IMR-90 (cell line): ENCODE measurements at regions of chr4 and their contacts with region 1.

Region 1: DNA sequence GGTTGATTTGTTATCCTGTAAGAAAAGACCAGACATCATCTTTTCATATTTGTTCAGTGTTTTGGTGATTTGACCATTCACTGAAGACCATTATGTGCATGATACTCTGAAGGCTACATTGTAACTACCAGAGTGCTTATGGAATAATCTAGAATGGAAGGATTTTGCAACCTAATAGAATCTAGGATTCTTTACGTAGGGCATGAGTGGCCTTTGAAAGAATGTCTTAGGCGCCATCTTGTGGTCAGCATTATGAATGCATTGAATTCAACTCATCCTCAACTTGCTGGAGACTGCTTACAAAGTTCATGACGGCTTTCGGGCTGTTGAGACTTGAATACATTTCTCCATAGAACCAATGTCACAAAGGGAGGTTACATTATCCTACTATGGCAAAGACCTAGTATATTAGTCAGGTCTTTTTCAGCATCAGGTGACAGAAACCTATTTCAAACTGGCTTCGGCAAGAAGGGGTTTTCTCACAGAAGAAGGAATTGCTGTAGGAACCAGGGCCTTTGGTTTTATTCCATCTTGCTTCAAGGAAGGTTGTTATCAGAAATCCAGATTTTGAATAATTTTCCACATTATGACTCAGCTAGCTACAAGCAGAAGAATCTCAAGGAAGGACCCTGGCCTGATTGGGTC is 104.1 kb downstream of the GPAT3 start:
- DNase-seq: peak; percentile 80
- ATAC-seq: peak; percentile 97
- H3K4me3 ChIP-seq: no peak overlapping the region
- H3K27ac ChIP-seq: no peak overlapping the region
- H3K4me1 ChIP-seq: no peaks in the 10 kb centered on the region
- H3K27me3 ChIP-seq: peaks cover 10% of the 10 kb centered on the region
- CTCF ChIP-seq: peak; percentile 90
- POLR2A ChIP-seq: peak; percentile 44; the same call in 1 of the 2 replicates
- RAD21 ChIP-seq: peak; percentile 90

Region 2: GRCh38 chr4:83362492-83363329 is 277.3 kb before region 1 on chr4:
- CTCF ChIA-PET with region 1: interaction called, 6 read pairs
- POLR2A ChIA-PET with region 1: no interaction called
- dilution Hi-C with region 1: no loop called
- in situ Hi-C with region 1: loop called (anchors 10 kb)
- intact Hi-C with region 1: loop called (anchors 1 kb)
- DNase-seq: peak; percentile 34
- ATAC-seq: peak; percentile 84
- H3K4me3 ChIP-seq: no peak overlapping the region
- H3K27ac ChIP-seq: no peak overlapping the region
- H3K4me1 ChIP-seq: peaks cover 1% of the 10 kb centered on the region
- H3K27me3 ChIP-seq: peaks cover 14% of the 10 kb centered on the region
- CTCF ChIP-seq: peak; percentile 47
- POLR2A ChIP-seq: no peak
- RAD21 ChIP-seq: peak; percentile 36; the same call in 1 of the 2 replicates

Region 3: DNA sequence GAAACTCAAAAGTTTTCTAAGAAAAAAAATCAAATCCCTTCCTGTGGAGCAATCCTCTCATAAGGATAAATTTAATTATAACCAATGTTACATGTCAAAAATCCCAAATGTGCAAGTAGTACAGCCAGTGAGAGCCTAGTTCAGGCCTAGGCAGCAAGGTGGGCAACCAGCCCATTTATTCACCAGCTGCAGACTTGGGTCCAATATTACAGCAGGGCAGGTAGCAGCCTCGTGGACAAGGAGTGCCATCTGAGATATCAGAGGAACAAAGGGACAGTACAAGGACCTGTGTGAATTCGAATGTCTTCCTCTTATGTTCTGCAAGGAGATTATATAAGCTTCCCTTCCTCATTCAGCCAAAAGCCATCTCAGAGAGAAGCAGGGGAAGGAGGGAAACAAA is 191.0 kb before region 1 on chr4:
- CTCF ChIA-PET with region 1: no interaction called
- POLR2A ChIA-PET with region 1: no interaction called
- dilution Hi-C with region 1: no loop called
- in situ Hi-C with region 1: no loop called
- intact Hi-C with region 1: no loop called
- DNase-seq: no peak
- ATAC-seq: no peak
- H3K4me3 ChIP-seq: no peak overlapping the region
- H3K27ac ChIP-seq: no peak overlapping the region
- H3K4me1 ChIP-seq: no peaks in the 10 kb centered on the region
- H3K27me3 ChIP-seq: no peaks in the 10 kb centered on the region
- CTCF ChIP-seq: no peak
- POLR2A ChIP-seq: no peak
- RAD21 ChIP-seq: no peak

Region 4: GRCh38 chr4:83490876-83491450 is 149.0 kb before region 1 on chr4:
- CTCF ChIA-PET with region 1: interaction called, 4 read pairs
- POLR2A ChIA-PET with region 1: no interaction called
- dilution Hi-C with region 1: no loop called
- in situ Hi-C with region 1: no loop called
- intact Hi-C with region 1: loop called (anchors 2 kb)
- DNase-seq: peak; percentile 18
- ATAC-seq: peak; percentile 79
- H3K4me3 ChIP-seq: no peak overlapping the region
- H3K27ac ChIP-seq: no peak overlapping the region
- H3K4me1 ChIP-seq: no peaks in the 10 kb centered on the region
- H3K27me3 ChIP-seq: no peaks in the 10 kb centered on the region
- CTCF ChIP-seq: peak; percentile 65
- POLR2A ChIP-seq: no peak
- RAD21 ChIP-seq: peak; percentile 48

Region 5: GRCh38 chr4:83510442-83510841 is 129.5 kb before region 1 on chr4:
- CTCF ChIA-PET with region 1: no interaction called
- POLR2A ChIA-PET with region 1: no interaction called
- dilution Hi-C with region 1: no loop called
- in situ Hi-C with region 1: loop called (anchors 5 kb)
- intact Hi-C with region 1: loop called (anchors 1 kb)
- DNase-seq: no peak
- ATAC-seq: no peak
- H3K4me3 ChIP-seq: no peak overlapping the region
- H3K27ac ChIP-seq: no peak overlapping the region
- H3K4me1 ChIP-seq: no peaks in the 10 kb centered on the region
- H3K27me3 ChIP-seq: no peaks in the 10 kb centered on the region; the same call in 1 of the 2 replicates
- CTCF ChIP-seq: no peak
- POLR2A ChIP-seq: no peak
- RAD21 ChIP-seq: no peak

Region 6: GRCh38 chr4:83961575-83961974 is 321.6 kb after region 1 on chr4:
- CTCF ChIA-PET with region 1: interaction called, 3 read pairs
- POLR2A ChIA-PET with region 1: no interaction called
- dilution Hi-C with region 1: no loop called
- in situ Hi-C with region 1: no loop called
- intact Hi-C with region 1: loop called (anchors 1 kb)
- DNase-seq: peak; percentile 23
- ATAC-seq: peak; percentile 37
- H3K4me3 ChIP-seq: no peak overlapping the region
- H3K27ac ChIP-seq: no peak overlapping the region
- H3K4me1 ChIP-seq: no peaks in the 10 kb centered on the region
- H3K27me3 ChIP-seq: 0 out of 2 replicates have a peak, but pooled peaks cover 2% of the 10 kb centered on the region
- CTCF ChIP-seq: peak; percentile 41
- POLR2A ChIP-seq: no peak
- RAD21 ChIP-seq: peak; percentile 55

Region 7: GRCh38 chr4:84503495-84504437 is 863.8 kb after region 1 on chr4:
- CTCF ChIA-PET with region 1: interaction called, 3 read pairs
- POLR2A ChIA-PET with region 1: no interaction called
- dilution Hi-C with region 1: no loop called
- in situ Hi-C with region 1: no loop called
- intact Hi-C with region 1: loop called (anchors 1 kb)
- DNase-seq: peak; percentile 66
- ATAC-seq: peak; percentile 89
- H3K4me3 ChIP-seq: no peak overlapping the region
- H3K27ac ChIP-seq: no peak overlapping the region
- H3K4me1 ChIP-seq: no peaks in the 10 kb centered on the region
- H3K27me3 ChIP-seq: peaks cover 52% of the 10 kb centered on the region
- CTCF ChIP-seq: peak; percentile 72
- POLR2A ChIP-seq: no peak
- RAD21 ChIP-seq: peak; percentile 75